Activated CD8-positive, alpha-beta T cell treated with anti-CD3 and anti-CD28 coated beads for 36 hours (primary cell): ENCODE measurements at regions of chr12 and their contacts with region 1.

Region 1: GRCh38 chr12:120649442-120650232 is 9.2 kb downstream of the CABP1 start:
- DNase-seq: no peak
- ATAC-seq: no peak
- H3K4me3 Mint-ChIP-seq: peak overlapping the region; percentile 46
- H3K27ac Mint-ChIP-seq: no peak overlapping the region
- H3K4me1 Mint-ChIP-seq: peaks cover 7% of the 10 kb centered on the region
- H3K27me3 Mint-ChIP-seq: peaks cover 48% of the 10 kb centered on the region
- CTCF ChIP-seq: peak; percentile 57

Region 2: GRCh38 chr12:120528861-120529525 is 120.6 kb before region 1 on chr12 and contains the start of gene COQ5:
- CTCF ChIA-PET with region 1: no interaction called
- POLR2A ChIA-PET with region 1: no interaction called
- intact Hi-C with region 1: no loop called
- DNase-seq: peak; percentile 94
- ATAC-seq: peak; percentile 96
- H3K4me3 Mint-ChIP-seq: peak within 1 kb of the TSS; percentile 100
- H3K27ac Mint-ChIP-seq: peak within 1 kb of the TSS; percentile 100
- H3K4me1 Mint-ChIP-seq: peaks cover 19% of the 10 kb centered on the region
- H3K27me3 Mint-ChIP-seq: no peaks in the 10 kb centered on the region
- CTCF ChIP-seq: no peak
- total RNA-seq, gene COQ5: 34.4 to 35.5 TPM

Region 3: GRCh38 chr12:120554678-120555077 is 95.0 kb before region 1 on chr12:
- CTCF ChIA-PET with region 1: interaction called, 13 read pairs
- POLR2A ChIA-PET with region 1: no interaction called
- intact Hi-C with region 1: no loop called
- DNase-seq: no peak
- ATAC-seq: no peak
- H3K4me3 Mint-ChIP-seq: no peak overlapping the region
- H3K27ac Mint-ChIP-seq: no peak overlapping the region
- H3K4me1 Mint-ChIP-seq: peaks cover 5% of the 10 kb centered on the region
- H3K27me3 Mint-ChIP-seq: no peaks in the 10 kb centered on the region
- CTCF ChIP-seq: no peak

Region 4: DNA sequence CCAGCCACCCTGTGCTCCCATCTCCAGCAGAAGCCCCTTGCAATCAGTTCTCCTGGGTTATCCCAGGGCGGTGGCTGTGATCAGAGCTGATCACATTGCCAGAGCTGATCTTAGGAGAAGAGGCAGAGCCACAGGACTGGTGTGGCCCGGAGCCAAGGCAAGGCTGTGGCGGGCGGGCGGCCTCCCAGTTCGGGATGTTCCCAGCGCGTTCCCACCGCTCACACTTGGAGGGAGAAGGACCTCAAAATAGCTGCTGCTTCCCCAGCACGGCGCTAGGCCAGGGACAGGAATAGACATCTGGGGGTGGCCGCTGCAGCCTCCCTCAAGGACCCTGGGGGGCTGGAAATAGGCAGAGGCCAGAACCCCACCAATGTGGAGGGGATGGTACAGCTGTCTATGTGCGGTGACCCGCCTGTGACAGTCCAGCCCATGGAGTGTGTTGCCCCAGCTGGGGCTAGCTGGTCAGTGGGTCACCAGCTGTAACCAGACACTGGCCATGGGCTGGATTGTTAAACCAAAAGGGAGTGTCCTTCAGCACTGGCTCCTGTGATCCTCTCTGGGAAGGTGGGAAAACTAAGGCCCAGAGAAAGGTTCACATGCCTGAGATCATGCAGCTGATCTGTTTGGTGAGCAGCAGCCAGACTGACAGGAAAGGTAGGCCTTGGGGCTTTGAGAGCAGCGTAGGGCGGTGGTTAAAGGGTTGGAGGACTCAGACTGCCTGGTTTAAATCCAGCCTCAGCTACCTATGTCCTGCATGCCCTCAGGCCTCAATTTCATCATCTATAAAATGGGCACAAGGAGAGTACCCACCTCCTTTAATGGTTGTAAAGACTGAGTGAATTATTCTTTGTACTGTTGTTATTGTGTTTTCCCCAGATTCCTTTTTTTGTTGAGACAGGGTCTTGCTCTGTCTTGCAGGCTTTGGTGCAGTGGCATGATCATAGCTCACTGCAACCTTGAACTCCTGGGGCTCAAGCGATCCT is 60.4 kb before region 1 on chr12:
- CTCF ChIA-PET with region 1: interaction called, 180 read pairs
- POLR2A ChIA-PET with region 1: no interaction called
- intact Hi-C with region 1: no loop called
- DNase-seq: no peak
- ATAC-seq: no peak
- H3K4me3 Mint-ChIP-seq: no peak overlapping the region
- H3K27ac Mint-ChIP-seq: no peak overlapping the region
- H3K4me1 Mint-ChIP-seq: peaks cover under 1% of the 10 kb centered on the region
- H3K27me3 Mint-ChIP-seq: peaks cover 10% of the 10 kb centered on the region
- CTCF ChIP-seq: no peak

Region 5: DNA sequence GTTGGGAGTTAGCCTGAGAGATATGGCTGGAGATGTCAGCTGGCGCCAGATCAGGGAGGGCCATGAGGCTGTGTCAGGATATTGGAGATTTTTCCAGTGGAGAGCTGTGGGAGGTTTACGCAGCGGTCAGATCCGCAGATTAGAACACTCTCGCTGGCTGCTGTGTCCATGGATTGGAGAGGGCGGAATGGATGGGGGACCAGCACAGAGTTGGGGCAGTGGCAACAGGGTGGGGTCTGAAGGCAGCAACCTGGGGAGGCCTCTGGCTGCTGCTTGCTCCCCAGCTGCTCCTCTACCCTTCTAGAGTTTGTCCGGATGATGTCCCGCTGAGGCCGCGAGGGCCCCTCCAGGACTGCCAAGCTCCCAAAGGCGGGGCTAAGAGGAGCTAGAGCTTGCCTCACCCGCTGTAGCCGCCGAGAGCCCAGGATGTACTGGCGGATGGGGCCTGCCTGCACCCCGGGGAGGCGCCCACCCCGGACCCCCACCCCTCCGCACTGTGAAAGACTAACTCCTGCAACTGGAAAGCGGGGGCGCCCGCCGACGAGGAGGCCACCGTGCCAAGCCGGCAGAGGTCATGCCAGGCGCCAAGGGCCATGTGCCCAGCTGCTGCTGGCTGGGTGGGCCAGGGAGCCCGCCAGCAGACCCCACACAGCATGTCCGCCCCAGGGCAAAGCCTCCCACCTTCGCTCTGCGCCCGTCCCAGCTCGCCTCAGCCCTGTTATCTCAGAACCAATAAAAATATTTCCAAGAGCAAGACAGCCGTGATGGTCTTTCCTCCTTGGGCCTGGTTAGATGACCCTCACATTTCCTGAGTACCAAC is 17.1 kb after region 1 on chr12:
- CTCF ChIA-PET with region 1: interaction called, 84 read pairs
- POLR2A ChIA-PET with region 1: no interaction called
- intact Hi-C with region 1: no loop called
- DNase-seq: no peak
- ATAC-seq: no peak
- H3K4me3 Mint-ChIP-seq: no peak overlapping the region
- H3K27ac Mint-ChIP-seq: no peak overlapping the region
- H3K4me1 Mint-ChIP-seq: no peaks in the 10 kb centered on the region
- H3K27me3 Mint-ChIP-seq: no peaks in the 10 kb centered on the region
- CTCF ChIP-seq: no peak

Region 6: GRCh38 chr12:120686690-120687577 is 37.3 kb after region 1 on chr12 and contains the start of gene MLEC:
- CTCF ChIA-PET with region 1: interaction called, 45 read pairs
- POLR2A ChIA-PET with region 1: interaction called, 3 read pairs
- intact Hi-C with region 1: no loop called
- DNase-seq: peak; percentile 99
- ATAC-seq: peak; percentile 87
- H3K4me3 Mint-ChIP-seq: peak within 1 kb of the TSS; percentile 92
- H3K27ac Mint-ChIP-seq: peak within 1 kb of the TSS; percentile 93
- H3K4me1 Mint-ChIP-seq: peaks cover 36% of the 10 kb centered on the region
- H3K27me3 Mint-ChIP-seq: no peaks in the 10 kb centered on the region
- CTCF ChIP-seq: no peak
- total RNA-seq, gene MLEC: 79.2 to 79.4 TPM

Region 7: GRCh38 chr12:120720234-120720986 is 70.8 kb after region 1 on chr12:
- CTCF ChIA-PET with region 1: interaction called, 40 read pairs
- POLR2A ChIA-PET with region 1: no interaction called
- intact Hi-C with region 1: no loop called
- DNase-seq: no peak
- ATAC-seq: no peak
- H3K4me3 Mint-ChIP-seq: no peak overlapping the region
- H3K27ac Mint-ChIP-seq: no peak overlapping the region
- H3K4me1 Mint-ChIP-seq: peaks cover 12% of the 10 kb centered on the region
- H3K27me3 Mint-ChIP-seq: no peaks in the 10 kb centered on the region
- CTCF ChIP-seq: no peak

Region 8: DNA sequence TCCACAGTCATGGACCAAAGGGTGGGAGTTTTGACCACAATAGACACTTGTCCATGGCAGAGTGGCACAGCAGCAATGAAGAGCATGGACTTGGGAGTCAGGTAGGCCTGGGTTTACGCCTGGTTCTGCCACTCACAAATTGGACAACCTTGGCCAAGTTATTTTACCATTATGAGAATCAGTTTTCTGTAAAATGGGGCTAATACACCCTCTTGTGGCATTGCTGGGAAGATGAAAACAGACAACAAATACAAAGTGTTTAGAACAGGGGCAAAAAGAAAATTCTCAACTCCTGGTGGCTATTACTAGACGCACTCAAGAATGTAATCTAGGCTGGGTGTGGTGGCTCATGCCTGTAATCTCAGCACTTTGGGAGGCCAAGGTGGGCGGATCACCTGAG is 364.1 kb after region 1 on chr12:
- CTCF ChIA-PET with region 1: no interaction called
- POLR2A ChIA-PET with region 1: no interaction called
- intact Hi-C with region 1: no loop called
- DNase-seq: no peak
- ATAC-seq: no peak
- H3K4me3 Mint-ChIP-seq: no peak overlapping the region
- H3K27ac Mint-ChIP-seq: no peak overlapping the region
- H3K4me1 Mint-ChIP-seq: peaks cover 23% of the 10 kb centered on the region
- H3K27me3 Mint-ChIP-seq: no peaks in the 10 kb centered on the region
- CTCF ChIP-seq: no peak